ENCODE measurements at regions of chr7 and their contacts with region 1.

Region 1: DNA sequence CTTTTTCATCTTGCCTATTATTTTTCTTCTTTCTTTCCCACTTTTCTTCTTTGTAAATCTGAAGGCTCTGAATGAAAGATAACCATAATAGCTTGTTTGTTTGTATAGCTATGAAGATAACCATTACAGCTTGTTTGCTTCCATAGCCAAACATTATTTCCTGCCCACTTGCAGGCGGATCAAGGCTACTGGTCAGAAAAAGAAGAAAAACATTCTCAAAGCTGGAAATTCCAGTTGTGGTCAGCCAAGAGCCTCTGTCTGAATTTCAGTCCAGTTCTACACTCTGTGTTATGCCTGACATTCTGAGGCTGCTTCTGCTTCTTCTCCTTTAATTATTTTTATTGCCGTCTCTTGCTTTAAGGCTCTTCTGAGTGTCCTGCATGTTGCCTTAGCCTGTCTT is 48.9 kb downstream of the TMEM178B start:
- DNase-seq: no peak
- ATAC-seq: no peak
- H3K4me3 ChIP-seq: no peak overlapping the region
- H3K4me3 Mint-ChIP-seq: no peak overlapping the region
- H3K27ac ChIP-seq: no peak overlapping the region
- H3K27ac Mint-ChIP-seq: no peak overlapping the region
- H3K4me1 ChIP-seq: no peaks in the 10 kb centered on the region
- H3K4me1 Mint-ChIP-seq: no peaks in the 10 kb centered on the region
- H3K27me3 ChIP-seq: peaks cover 0 to 6% (median 0%) of the 10 kb centered on the region in 4 experiments
- H3K27me3 Mint-ChIP-seq: peaks cover 32% of the 10 kb centered on the region
- CTCF ChIP-seq: no peak

Region 2: GRCh38 chr7:141208539-141208938 is 85.8 kb after region 1 on chr7:
- CTCF ChIA-PET with region 1: no interaction called
- POLR2A ChIA-PET with region 1: no interaction called
- intact Hi-C with region 1: no loop called
- DNase-seq: no peak
- ATAC-seq: no peak
- H3K4me3 ChIP-seq: no peak overlapping the region
- H3K4me3 Mint-ChIP-seq: no peak overlapping the region
- H3K27ac ChIP-seq: no peak overlapping the region
- H3K27ac Mint-ChIP-seq: no peak overlapping the region
- H3K4me1 ChIP-seq: no peaks in the 10 kb centered on the region
- H3K4me1 Mint-ChIP-seq: no peaks in the 10 kb centered on the region
- H3K27me3 ChIP-seq: no peaks in the 10 kb centered on the region
- H3K27me3 Mint-ChIP-seq: peaks cover 15% of the 10 kb centered on the region
- CTCF ChIP-seq: no peak

Region 3: GRCh38 chr7:141776374-141776773 is 653.6 kb after region 1 on chr7 and contains the start of gene TAS2R4:
- CTCF ChIA-PET with region 1: no interaction called
- POLR2A ChIA-PET with region 1: no interaction called
- intact Hi-C with region 1: loop called (anchors 5 kb)
- DNase-seq: no peak
- ATAC-seq: no peak
- H3K4me3 ChIP-seq: no peak within 1 kb of the TSS
- H3K4me3 Mint-ChIP-seq: no peak within 1 kb of the TSS
- H3K27ac ChIP-seq: no peak within 1 kb of the TSS
- H3K27ac Mint-ChIP-seq: no peak within 1 kb of the TSS
- H3K4me1 ChIP-seq: no peaks in the 10 kb centered on the region
- H3K4me1 Mint-ChIP-seq: no peaks in the 10 kb centered on the region
- H3K27me3 ChIP-seq: no peaks in the 10 kb centered on the region
- H3K27me3 Mint-ChIP-seq: no peaks in the 10 kb centered on the region
- CTCF ChIP-seq: no peak
- total RNA-seq, gene TAS2R4: 5.4 and 6.7 TPM in 2 replicates